ENCODE measurements at regions of chr3 and their contacts with region 1.

Region 1: GRCh38 chr3:196251918-196252317 is 35.6 kb downstream of the SLC51A start:
- DNase-seq: no peak
- H3K4me3 ChIP-seq: no peak overlapping the region
- CTCF ChIP-seq: no peak

Region 2: GRCh38 chr3:196159952-196160804 is 91.7 kb before region 1 on chr3:
- CTCF ChIA-PET with region 1: no interaction called
- POLR2A ChIA-PET with region 1: no interaction called
- DNase-seq: peak; percentile 26
- H3K4me3 ChIP-seq: no peak overlapping the region
- CTCF ChIP-seq: no peak

Region 3: DNA sequence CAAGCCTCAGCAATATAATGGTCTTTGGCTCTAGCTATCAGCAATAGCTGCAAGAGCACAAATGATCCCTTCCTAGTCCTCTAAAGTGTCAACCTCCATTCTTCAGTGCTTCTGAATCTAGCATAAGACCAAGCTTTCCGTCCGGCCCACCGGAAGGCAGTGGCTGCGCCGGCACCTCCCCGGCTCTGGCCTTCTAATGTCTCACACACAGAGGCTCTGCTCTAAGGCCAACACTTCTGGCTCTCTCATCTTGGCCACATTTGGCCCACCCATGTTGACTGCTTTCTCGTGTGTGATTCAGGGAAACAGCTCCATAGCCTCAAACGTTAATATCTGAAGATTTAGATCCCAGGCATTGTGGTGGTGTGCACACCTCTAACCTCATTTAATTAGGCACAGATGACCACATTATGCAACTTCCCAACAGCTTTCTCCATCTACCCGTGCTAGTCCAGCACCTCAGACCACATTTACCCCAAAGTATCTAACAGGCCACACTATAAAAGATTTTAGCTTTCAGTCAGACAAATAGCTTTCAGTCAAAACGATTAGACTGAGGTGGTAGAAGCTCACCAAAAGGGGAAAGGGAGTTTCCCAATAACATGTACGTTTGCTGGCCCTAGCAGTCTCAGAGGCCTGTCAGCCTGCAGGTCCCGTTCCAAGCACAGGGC is 16.3 kb before region 1 on chr3:
- CTCF ChIA-PET with region 1: interaction called, 28 read pairs
- POLR2A ChIA-PET with region 1: no interaction called
- DNase-seq: no peak
- H3K4me3 ChIP-seq: no peak overlapping the region
- CTCF ChIP-seq: no peak

Region 4: GRCh38 chr3:196268270-196269163 is 16.6 kb after region 1 on chr3:
- CTCF ChIA-PET with region 1: interaction called, 30 read pairs
- POLR2A ChIA-PET with region 1: no interaction called
- DNase-seq: no peak
- H3K4me3 ChIP-seq: no peak overlapping the region
- CTCF ChIP-seq: no peak

Region 5: DNA sequence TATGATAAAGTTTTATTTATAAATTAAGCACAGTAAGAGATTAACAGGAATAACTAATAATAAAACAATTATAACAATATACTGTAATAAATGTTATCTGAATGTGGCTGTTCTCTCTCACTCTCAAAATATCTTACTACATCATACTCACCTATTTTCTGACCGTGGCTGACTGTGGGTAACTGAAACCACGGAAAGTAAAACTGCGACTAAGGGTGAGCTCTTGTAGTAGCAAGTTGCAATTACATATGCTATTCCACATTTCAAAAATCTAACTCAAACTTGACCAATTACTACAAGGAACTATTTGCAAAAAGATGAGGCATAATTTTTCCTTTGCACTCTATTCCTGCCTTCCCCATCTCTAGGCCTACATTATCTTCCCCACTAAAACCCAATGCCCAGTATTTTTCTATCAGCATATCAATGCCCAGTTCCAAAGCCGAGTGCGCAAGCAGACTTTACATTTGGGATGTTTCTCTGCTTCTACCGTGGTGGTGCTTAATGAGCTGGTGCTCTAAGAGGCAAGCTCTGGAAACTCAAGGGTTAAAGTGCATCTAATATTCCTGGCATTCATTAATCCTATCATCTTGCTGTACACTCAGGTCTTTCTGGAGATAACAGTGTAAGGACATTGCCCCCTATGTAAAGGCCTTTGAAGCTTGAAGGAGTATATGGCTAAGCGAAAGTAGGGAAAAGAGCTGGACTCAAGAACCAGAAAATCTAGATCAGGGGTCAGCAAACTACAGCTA is 28.9 kb after region 1 on chr3:
- CTCF ChIA-PET with region 1: interaction called, 12 read pairs
- POLR2A ChIA-PET with region 1: no interaction called
- DNase-seq: no peak
- H3K4me3 ChIP-seq: no peak overlapping the region
- CTCF ChIP-seq: no peak

Region 6: DNA sequence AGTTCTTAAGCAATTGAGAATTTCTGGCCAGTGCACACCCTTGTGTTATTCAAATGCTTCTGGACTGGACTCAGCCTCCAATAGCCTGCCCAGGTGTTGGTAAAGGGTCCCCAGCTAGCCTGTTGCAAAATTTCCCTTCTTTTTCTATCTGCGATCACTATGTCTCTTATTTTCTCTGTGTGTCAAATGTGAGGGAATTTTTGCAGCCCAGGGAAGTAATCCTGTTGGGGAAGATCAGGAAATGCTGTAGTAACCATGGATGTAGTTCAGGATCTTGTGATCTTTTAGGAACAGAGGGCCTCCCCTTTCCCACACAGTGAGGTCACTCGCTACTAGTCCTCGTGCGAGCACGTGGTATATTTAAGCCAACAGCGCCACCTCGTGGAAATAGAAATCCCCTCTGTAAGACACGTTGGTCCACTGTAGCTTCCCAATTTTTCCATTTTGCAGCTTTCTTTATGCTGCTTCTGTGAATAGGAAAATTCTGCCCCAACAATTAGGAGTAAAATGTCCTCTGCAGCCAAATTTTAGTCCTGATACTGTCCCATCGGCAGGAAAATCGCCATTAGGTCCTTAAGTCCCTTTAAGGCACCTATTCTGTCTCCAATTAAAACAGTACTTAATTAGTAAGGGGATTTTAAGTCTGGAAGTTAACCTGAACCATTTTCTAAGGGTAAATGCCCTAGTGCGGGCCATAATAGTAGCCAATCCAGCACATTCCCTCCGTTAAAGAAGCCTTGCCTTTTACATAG is 267.2 kb after region 1 on chr3:
- CTCF ChIA-PET with region 1: interaction called, 185 read pairs
- POLR2A ChIA-PET with region 1: no interaction called
- DNase-seq: no peak
- H3K4me3 ChIP-seq: no peak overlapping the region
- CTCF ChIP-seq: peak; percentile 31